ENCODE measurements at regions of chr17 and their contacts with region 1.

Region 1: GRCh38 chr17:64236853-64237277 is 26.2 kb downstream of the TEX2 start:
- DNase-seq: peak; percentile 36
- H3K4me3 ChIP-seq: no peak overlapping the region
- H3K27ac ChIP-seq: no peak overlapping the region
- H3K4me1 ChIP-seq: peaks cover 6% of the 10 kb centered on the region
- H3K27me3 ChIP-seq: no peaks in the 10 kb centered on the region
- CTCF ChIP-seq: peak; percentile 19 to 21
- POLR2A ChIP-seq: no peak

Region 2: GRCh38 chr17:64226132-64226531 is 10.7 kb before region 1 on chr17:
- CTCF ChIA-PET with region 1: interaction called, 11 read pairs
- POLR2A ChIA-PET with region 1: no interaction called
- dilution Hi-C with region 1: no loop called
- intact Hi-C with region 1: no loop called
- DNase-seq: no peak
- H3K4me3 ChIP-seq: no peak overlapping the region
- H3K27ac ChIP-seq: no peak overlapping the region
- H3K4me1 ChIP-seq: no peaks in the 10 kb centered on the region
- H3K27me3 ChIP-seq: no peaks in the 10 kb centered on the region
- CTCF ChIP-seq: no peak
- POLR2A ChIP-seq: no peak